Breast epithelium (tissue), 4 donors: ENCODE measurements at regions of chr3 and their contacts with region 1.

Region 1: GRCh38 chr3:26114851-26115250 is 325.0 kb downstream of the OXSM start:
- DNase-seq: no peak
- H3K4me3 ChIP-seq: no peak overlapping the region
- H3K27ac ChIP-seq: no peak overlapping the region
- H3K4me1 ChIP-seq: no peaks in the 10 kb centered on the region
- H3K27me3 ChIP-seq: no peaks in the 10 kb centered on the region
- CTCF ChIP-seq: no peak
- POLR2A ChIP-seq: no peak

Region 2: DNA sequence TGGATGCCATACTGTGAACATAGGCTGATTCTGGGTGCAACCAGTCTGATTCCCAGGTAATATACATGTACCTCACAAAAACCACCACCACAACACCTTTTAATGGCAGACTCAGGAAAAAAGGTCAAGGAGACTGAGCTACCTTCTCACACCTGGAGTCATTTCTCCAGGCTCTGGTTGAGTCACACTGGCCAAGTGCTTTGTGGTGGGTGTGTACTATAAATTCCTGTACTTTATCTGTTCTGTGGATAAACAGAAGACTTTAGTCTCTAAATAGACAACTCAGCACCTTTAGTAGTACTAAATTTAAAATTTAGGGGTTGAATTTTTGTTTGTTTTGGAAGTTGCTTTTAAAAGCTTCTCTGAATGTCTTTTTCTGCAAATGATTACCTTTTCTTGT is 496.8 kb before region 1 on chr3:
- intact Hi-C with region 1: no loop called
- DNase-seq: no peak
- H3K4me3 ChIP-seq: no peak overlapping the region
- H3K27ac ChIP-seq: no peak overlapping the region
- H3K4me1 ChIP-seq: no peaks in the 10 kb centered on the region
- H3K27me3 ChIP-seq: no peaks in the 10 kb centered on the region
- CTCF ChIP-seq: no peak
- POLR2A ChIP-seq: no peak

Region 3: DNA sequence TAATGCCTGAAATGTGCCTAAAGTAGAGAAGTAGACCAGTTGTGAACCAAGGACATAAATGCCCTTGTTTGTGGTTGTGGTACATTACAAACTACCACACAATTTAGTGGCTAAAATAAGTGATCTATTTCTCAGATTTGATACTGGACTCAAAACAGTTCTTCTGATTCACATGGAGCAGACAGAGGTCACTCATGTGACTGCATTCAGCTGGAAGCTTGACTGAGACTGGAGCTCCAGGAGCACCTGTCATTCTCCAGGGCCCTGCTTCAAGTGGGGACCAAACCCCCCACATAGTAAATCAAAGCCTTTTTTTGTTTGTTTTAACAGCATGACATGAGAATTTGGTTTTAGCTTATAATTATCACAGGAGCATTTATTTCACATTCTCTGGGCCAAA is 23.8 kb before region 1 on chr3:
- intact Hi-C with region 1: no loop called
- DNase-seq: no peak
- H3K4me3 ChIP-seq: no peak overlapping the region
- H3K27ac ChIP-seq: no peak overlapping the region
- H3K4me1 ChIP-seq: no peaks in the 10 kb centered on the region
- H3K27me3 ChIP-seq: no peaks in the 10 kb centered on the region
- CTCF ChIP-seq: no peak
- POLR2A ChIP-seq: no peak

Region 4: GRCh38 chr3:26369119-26369518 is 254.3 kb after region 1 on chr3:
- intact Hi-C with region 1: loop called (anchors 5 kb)
- DNase-seq: no peak
- H3K4me3 ChIP-seq: no peak overlapping the region
- H3K27ac ChIP-seq: no peak overlapping the region
- H3K4me1 ChIP-seq: no peaks in the 10 kb centered on the region
- H3K27me3 ChIP-seq: no peaks in the 10 kb centered on the region
- CTCF ChIP-seq: no peak
- POLR2A ChIP-seq: no peak